ENCODE measurements at regions of chr9 and their contacts with region 1.

Region 1: GRCh38 chr9:99184475-99185347 is 37.0 kb downstream of the ALG2 start:
- DNase-seq: peak; percentile 47 to 94
- H3K4me3 ChIP-seq: peak overlapping the region; percentile 31 to 60
- H3K27ac ChIP-seq: peak overlapping the region; percentile 42 to 60
- H3K4me1 ChIP-seq: peaks cover 4 to 6% of the 10 kb centered on the region in 2 donors
- H3K27me3 ChIP-seq: no peaks in the 10 kb centered on the region
- CTCF ChIP-seq: peak; percentile 87 to 98 (median 93)

Region 2: GRCh38 chr9:99211741-99212140 is 27.0 kb after region 1 on chr9:
- intact Hi-C with region 1: no loop called
- DNase-seq: no peak
- H3K4me3 ChIP-seq: no peak overlapping the region
- H3K27ac ChIP-seq: no peak overlapping the region
- H3K4me1 ChIP-seq: no peaks in the 10 kb centered on the region
- H3K27me3 ChIP-seq: no peaks in the 10 kb centered on the region
- CTCF ChIP-seq: no peak

Region 3: DNA sequence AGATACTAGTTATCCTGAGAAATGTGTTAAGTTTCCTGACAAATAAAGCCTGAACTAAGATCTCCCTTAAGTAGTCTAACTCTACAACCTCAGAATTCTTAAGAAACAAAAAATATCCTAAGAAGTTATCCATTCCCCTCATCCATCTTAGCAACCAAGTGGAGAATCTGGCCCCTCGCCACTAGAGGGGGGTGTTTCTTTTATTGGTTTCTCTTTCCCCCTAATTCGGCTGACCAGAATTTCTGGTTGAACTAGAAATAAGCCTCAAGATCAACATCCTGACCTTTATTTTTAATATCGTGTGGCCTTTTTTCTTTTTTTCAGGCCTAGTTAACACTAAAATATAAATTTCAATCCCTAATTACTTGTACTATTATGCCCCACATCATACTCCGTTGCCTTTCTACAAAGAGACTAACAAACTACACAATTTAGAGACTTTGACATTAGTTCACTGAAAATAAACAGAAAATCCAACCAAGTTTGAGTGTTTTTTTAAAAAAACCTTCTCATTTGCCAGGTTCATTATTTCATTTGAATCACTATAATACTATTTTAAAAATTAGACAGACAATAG is 622.7 kb after region 1 on chr9:
- intact Hi-C with region 1: loop called (anchors 5 kb)
- DNase-seq: peak in 1 of 2 donors; percentile 80
- H3K4me3 ChIP-seq: no peak overlapping the region
- H3K27ac ChIP-seq: no peak overlapping the region
- H3K4me1 ChIP-seq: no peaks in the 10 kb centered on the region
- H3K27me3 ChIP-seq: no peaks in the 10 kb centered on the region
- CTCF ChIP-seq: peak; percentile 31 to 77 (median 66)

Region 4: DNA sequence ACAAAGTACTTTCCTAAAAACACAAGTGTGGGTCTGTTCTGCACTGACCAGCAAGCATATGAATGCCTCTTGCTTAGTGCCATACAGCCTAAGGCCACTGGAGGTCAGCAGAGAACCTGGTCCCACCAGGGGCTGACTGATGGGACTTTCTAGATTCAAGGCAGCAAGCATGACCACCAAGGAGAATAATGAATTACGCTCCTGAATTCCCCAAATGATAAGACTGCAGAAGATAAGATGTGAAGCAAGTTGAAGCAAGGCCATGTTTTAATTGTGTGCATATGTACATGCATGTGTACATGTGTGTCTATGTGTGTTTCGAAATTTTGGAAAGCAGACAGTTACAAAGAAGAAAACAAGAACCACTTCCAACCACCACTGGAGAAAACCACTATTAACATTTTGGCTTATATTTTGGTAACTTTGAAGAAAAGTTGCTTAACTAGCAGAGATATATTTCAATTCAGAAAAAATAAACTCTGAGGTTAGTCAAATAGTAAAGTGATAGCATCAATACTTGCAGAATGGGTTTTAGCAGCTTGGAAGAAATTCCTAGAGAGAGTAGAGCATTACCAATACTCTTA is 843.6 kb after region 1 on chr9:
- intact Hi-C with region 1: loop called (anchors 10 kb)
- DNase-seq: peak in 1 of 2 donors; percentile 77
- H3K4me3 ChIP-seq: no peak overlapping the region
- H3K27ac ChIP-seq: no peak overlapping the region
- H3K4me1 ChIP-seq: no peaks in the 10 kb centered on the region
- H3K27me3 ChIP-seq: no peaks in the 10 kb centered on the region
- CTCF ChIP-seq: peak; percentile 68 to 88 (median 86)

Region 5: GRCh38 chr9:100322954-100323536 is 1138.3 kb after region 1 on chr9:
- intact Hi-C with region 1: loop called (anchors 2 kb)
- DNase-seq: no peak
- H3K4me3 ChIP-seq: no peak overlapping the region
- H3K27ac ChIP-seq: no peak overlapping the region
- H3K4me1 ChIP-seq: no peaks in the 10 kb centered on the region
- H3K27me3 ChIP-seq: no peaks in the 10 kb centered on the region
- CTCF ChIP-seq: peak in 2 of 3 experiments; percentile 59 to 69

Measured in ascending aorta (tissue), 2 donors.